ENCODE measurements at regions of chr19 and their contacts with region 1.

Region 1: GRCh38 chr19:19821366-19821951 is at the start of gene ZNF506:
- DNase-seq: peak; percentile 100
- H3K4me3 ChIP-seq: peak within 1 kb of the TSS; percentile 54 to 79 (median 76)
- H3K27ac ChIP-seq: peak within 1 kb of the TSS; percentile 90 to 97 (median 92)
- H3K4me1 ChIP-seq: peaks cover 0 to 30% (median 12%) of the 10 kb centered on the region in 4 donors
- H3K27me3 ChIP-seq: no peaks in the 10 kb centered on the region
- CTCF ChIP-seq: no peak
- EP300 ChIP-seq: no peak
- POLR2A ChIP-seq: peak; percentile 89
- total RNA-seq, gene ZNF506: 21.9 to 45.7 (median 28.3) TPM

Region 2: GRCh38 chr19:19732579-19733501 is 88.6 kb before region 1 on chr19 and contains the start of gene ZNF14:
- intact Hi-C with region 1: loop called (anchors 5 kb)
- DNase-seq: peak; percentile 97
- H3K4me3 ChIP-seq: peak within 1 kb of the TSS; percentile 72 to 85 (median 80)
- H3K27ac ChIP-seq: peak within 1 kb of the TSS; percentile 74 to 80 (median 78)
- H3K4me1 ChIP-seq: peaks cover 0 to 12% (median 10%) of the 10 kb centered on the region in 4 donors
- H3K27me3 ChIP-seq: no peaks in the 10 kb centered on the region
- CTCF ChIP-seq: peak in 1 of 4 experiments; percentile 10
- EP300 ChIP-seq: no peak
- POLR2A ChIP-seq: peak; percentile 70 to 72
- total RNA-seq, gene ZNF14: 7.8 to 14.5 (median 9.5) TPM

Region 3: GRCh38 chr19:19776041-19777008 is 45.1 kb before region 1 on chr19:
- intact Hi-C with region 1: loop called (anchors 1 kb)
- DNase-seq: peak; percentile 99
- H3K4me3 ChIP-seq: peak overlapping the region; percentile 56 to 75 (median 70)
- H3K27ac ChIP-seq: peak overlapping the region; percentile 70 to 79 (median 76)
- H3K4me1 ChIP-seq: peaks cover 0 to 24% (median 18%) of the 10 kb centered on the region in 4 donors
- H3K27me3 ChIP-seq: no peaks in the 10 kb centered on the region
- CTCF ChIP-seq: no peak
- EP300 ChIP-seq: no peak
- POLR2A ChIP-seq: no peak

Region 4: DNA sequence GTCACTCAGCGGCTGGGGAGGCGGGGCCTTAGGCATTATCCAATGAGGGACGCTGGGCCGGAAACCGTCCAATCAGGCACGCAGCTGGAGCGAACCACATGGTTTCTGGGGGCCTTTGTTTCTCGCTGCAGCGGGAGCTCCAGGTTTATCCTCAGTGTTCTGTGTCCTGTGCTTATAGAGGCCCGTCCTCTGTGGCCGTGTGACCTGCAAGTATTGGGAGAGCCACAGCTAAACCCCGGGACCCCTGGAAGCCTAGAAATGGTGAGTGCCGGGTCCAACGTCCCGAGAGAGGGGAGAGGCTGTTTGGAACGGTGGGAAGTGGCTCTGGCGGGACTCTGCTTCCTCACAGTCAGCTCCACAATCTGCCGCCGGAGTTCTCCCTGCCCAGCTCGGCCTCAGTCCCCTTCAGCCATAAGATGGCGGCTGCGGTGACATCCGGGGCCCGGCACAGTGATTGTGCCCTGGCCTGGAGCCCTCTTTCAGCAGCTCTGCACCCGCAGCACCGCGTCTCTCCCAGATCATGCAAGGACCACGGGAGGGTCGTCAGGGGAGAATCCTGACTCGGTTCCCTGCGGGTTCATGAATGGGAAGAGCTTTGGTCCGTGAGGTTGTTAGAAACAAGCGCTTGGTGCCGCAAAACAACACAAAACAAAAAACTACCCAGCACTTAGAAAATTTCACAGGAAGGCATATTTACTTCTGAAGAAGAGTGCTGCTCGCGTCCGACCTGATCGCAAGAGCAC is 44.5 kb after region 1 on chr19 and contains the start of gene ZNF253:
- intact Hi-C with region 1: loop called (anchors 1 kb)
- DNase-seq: peak; percentile 98
- H3K4me3 ChIP-seq: peak within 1 kb of the TSS; percentile 52 to 81 (median 71)
- H3K27ac ChIP-seq: peak within 1 kb of the TSS; percentile 89 to 96 (median 90)
- H3K4me1 ChIP-seq: peaks cover 0 to 28% (median 20%) of the 10 kb centered on the region in 4 donors
- H3K27me3 ChIP-seq: peaks cover 0 to 2% (median 0%) of the 10 kb centered on the region in 3 donors
- CTCF ChIP-seq: no peak
- EP300 ChIP-seq: no peak
- POLR2A ChIP-seq: peak; percentile 83 to 88
- total RNA-seq, gene ZNF253: 2.4 to 11.6 (median 7.3) TPM

Region 5: DNA sequence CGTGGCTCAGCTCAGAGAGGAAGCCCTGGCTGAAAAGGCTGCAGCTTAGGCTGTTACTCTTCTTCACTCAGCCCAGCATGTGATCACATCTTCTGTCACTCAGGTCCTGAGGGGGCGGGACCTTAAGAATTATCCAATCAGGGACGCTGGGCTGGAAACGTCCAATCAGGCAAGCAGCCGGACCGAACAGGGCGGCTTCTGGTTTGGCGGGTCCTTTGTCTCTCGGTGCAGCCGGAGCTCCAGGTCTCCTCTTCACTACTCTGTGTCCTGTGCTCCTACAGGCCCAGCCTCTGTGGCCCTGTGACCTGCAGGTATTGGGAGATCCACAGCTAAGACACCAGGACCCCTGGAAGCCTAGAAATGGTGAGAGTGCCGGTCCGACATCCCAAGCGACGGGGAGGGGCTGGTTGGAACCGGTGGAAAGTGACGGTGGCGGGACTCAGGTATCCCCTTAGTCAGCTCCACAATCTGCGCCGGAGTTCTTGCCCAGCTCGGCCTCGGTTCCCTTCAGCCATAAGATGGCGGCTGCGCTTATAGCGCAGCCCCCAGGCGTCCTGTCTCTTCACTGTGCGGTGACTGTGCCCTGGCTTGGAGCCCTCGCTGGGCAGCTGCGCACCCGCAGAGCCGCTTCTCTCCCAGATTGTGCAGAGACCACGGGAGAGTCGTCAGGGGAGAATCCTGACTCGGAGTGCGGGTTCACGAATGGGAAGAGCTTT is 79.4 kb after region 1 on chr19 and contains the start of gene ZNF93:
- intact Hi-C with region 1: loop called (anchors 10 kb)
- DNase-seq: peak; percentile 98
- H3K4me3 ChIP-seq: peak within 1 kb of the TSS; percentile 54 to 85 (median 69)
- H3K27ac ChIP-seq: peak within 1 kb of the TSS; percentile 83 to 99 (median 88)
- H3K4me1 ChIP-seq: peaks cover 0 to 23% (median 6%) of the 10 kb centered on the region in 4 donors
- H3K27me3 ChIP-seq: no peaks in the 10 kb centered on the region
- CTCF ChIP-seq: no peak
- EP300 ChIP-seq: no peak
- POLR2A ChIP-seq: peak; percentile 27 to 63
- total RNA-seq, gene ZNF93: 5.1 to 14.4 (median 6.7) TPM

Measured in sigmoid colon (tissue), 7 donors.